AG04449 (cell line): ENCODE measurements at regions of chr2 and their contacts with region 1.

Region 1: DNA sequence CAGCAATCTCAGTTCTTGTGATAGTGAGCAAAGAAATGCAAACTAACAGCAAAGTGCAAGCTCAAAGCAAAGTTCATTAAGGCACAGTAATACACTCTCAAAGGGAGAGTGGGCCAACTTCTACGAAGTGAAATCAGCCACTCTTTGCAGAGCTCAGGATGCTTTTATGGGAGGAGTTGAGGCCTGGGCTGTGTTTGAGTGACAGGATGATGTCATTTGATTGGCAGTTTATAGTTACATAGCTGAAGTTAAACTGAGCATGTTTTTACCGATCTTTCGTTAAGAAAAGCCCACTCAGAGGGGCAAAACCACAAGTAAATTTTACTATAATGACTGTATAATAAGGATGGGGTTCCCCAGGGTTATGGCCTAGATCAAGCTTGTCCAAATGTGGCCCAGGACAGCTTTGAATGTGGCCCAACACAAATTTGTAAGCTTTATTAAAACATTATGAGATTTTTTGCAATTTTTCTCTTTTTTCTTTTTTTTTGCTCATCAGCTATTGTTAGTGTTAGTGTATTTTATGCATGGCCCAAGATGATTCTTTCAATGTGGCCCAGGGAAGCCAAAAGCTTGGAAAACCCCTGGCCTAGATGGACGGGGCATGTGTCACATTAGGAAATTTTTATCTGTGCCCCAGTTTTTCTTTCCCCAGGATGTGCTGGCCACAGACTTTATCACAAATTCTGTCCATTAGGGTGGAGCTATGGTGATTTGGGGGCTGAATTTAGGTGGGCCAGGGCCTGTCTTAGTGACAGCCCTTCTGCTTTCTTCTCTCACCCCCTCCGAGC is 8.3 kb upstream of the DNAH7 start:
- DNase-seq: no peak
- H3K4me3 ChIP-seq: no peak overlapping the region
- CTCF ChIP-seq: no peak

Region 2: GRCh38 chr2:195709901-195710806 is 366.8 kb before region 1 on chr2:
- CTCF ChIA-PET with region 1: no interaction called
- POLR2A ChIA-PET with region 1: no interaction called
- DNase-seq: peak; percentile 46
- H3K4me3 ChIP-seq: no peak overlapping the region
- CTCF ChIP-seq: no peak

Region 3: GRCh38 chr2:195937176-195937575 is 139.8 kb before region 1 on chr2:
- CTCF ChIA-PET with region 1: no interaction called
- POLR2A ChIA-PET with region 1: no interaction called
- DNase-seq: no peak
- H3K4me3 ChIP-seq: no peak overlapping the region
- CTCF ChIP-seq: no peak

Region 4: GRCh38 chr2:196054631-196055030 is 22.3 kb before region 1 on chr2:
- CTCF ChIA-PET with region 1: no interaction called
- POLR2A ChIA-PET with region 1: no interaction called
- DNase-seq: no peak
- H3K4me3 ChIP-seq: no peak overlapping the region
- CTCF ChIP-seq: no peak

Region 5: DNA sequence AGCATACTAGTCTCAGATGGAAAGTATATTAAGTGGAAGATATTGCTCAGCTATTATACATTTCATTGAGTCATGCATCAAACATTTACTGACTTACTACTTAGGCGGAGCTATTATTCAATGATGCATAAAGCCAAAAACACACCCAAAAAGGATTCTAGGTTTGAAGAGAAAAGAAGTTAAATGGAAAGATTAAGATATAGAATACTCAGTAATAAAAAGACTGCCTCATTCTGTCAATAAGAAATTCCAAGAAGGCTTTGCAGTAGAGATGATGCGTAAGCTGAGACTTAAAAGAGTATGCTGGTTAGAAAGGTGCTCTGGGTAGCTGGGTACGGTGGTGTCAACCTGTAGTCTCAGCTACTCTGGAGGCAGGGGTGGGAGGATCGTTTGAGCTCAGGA is 66.8 kb after region 1 on chr2:
- CTCF ChIA-PET with region 1: interaction called, 18 read pairs
- POLR2A ChIA-PET with region 1: no interaction called
- DNase-seq: no peak
- H3K4me3 ChIP-seq: no peak overlapping the region
- CTCF ChIP-seq: no peak

Region 6: DNA sequence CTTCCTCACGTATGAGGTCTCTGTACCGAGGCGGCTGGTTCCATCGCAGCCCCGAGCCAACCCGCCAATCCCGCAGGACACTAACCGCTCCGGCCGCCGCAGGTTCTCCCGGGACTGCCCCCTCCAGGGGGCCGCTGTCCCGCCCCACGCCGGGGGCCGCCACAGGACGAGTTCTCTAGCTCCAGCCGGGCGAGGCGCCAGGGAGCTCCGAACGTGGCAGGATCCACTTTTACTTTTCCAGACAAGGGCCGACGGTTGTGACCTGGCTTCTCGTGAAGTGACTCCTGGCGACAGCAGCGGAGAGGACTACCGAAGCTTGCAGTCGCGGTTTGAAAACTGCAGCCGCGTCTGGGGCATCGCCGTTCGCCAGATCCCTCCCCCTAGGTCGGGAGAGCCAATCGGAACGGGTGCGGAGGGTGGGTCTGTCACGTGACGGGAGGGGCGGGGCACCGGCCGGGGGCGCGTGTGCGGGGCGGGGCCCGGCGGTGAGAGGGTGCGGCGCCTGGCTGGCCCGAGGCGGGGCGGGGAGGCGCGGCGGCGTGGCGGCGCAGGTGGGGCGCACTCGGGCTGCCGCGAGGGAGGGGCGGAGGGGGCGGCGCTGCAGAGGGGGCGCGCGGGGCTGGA is 94.4 kb after region 1 on chr2 and contains the start of gene STK17B:
- CTCF ChIA-PET with region 1: interaction called, 18 read pairs
- POLR2A ChIA-PET with region 1: interaction called, 3 read pairs
- DNase-seq: peak; percentile 44
- H3K4me3 ChIP-seq: peak within 1 kb of the TSS; percentile 83
- CTCF ChIP-seq: peak; percentile 0

Region 7: DNA sequence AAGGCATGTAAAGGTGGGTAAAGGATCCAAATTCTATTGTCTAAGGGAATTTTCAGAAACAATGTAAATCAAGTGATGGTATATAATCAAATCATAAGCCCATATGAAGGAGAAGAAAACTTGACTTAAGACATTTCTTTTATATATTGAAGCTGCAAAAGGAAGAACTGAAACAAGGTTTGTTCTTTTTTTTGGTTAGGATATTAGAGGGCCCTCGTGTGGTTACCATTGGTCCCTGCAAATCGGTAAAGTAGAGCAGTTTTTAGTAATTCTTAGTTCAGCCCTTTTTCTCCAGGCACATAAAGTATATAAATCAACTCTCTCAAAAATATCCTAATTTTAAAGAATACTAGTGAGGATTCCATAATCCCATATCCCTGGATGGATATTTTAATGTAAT is 200.0 kb after region 1 on chr2:
- CTCF ChIA-PET with region 1: interaction called, 75 read pairs
- POLR2A ChIA-PET with region 1: interaction called, 3 read pairs
- DNase-seq: no peak
- H3K4me3 ChIP-seq: no peak overlapping the region
- CTCF ChIP-seq: peak; percentile 42

Region 8: GRCh38 chr2:196284144-196284844 is 207.3 kb after region 1 on chr2:
- CTCF ChIA-PET with region 1: interaction called, 75 read pairs
- POLR2A ChIA-PET with region 1: no interaction called
- DNase-seq: no peak
- H3K4me3 ChIP-seq: no peak overlapping the region
- CTCF ChIP-seq: no peak

Region 9: DNA sequence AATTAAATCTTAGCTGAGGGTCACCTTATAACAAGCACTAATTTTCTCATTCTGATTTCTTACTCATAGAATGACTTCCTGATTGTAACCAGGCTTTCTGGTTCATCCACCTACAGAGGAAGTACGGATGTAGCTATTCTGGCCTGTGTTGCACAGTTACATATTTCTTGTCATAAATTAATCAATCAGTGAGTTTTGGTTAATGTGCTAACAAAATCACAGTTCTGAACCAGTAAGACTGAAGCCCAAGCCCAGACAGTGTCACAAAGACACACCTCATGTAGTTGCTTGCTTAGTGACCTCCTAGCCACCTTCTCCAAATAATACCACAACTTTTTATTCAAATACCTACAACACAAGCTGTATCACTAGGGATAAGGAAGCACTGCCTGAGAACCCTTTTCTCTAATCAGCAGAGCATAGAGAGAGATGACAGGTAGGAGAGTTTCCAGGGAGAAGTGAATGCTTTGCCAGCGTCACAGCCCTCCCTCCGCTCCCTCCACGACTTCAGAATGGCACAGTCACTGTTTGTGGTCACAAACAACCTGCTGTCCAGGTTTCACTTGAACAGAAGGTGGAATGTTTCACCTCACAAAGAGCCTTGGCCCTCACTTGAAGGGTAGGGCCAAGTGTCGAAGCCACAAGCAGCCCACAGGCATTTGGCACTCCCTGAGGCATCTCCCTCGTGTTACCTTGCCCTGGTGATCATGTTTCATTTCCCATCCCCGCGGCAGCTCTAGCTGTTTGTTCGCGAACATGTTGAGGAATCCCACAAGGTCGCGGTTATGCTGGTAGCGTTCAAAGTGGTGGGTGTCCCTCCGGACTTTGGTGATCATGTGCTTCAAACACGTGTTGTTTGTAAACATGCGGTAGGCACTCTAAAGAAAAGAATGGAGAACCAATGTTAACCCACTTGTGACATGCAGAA is 215.2 kb after region 1 on chr2:
- CTCF ChIA-PET with region 1: interaction called, 50 read pairs
- POLR2A ChIA-PET with region 1: interaction called, 5 read pairs
- DNase-seq: no peak
- H3K4me3 ChIP-seq: no peak overlapping the region
- CTCF ChIP-seq: no peak

Region 10: DNA sequence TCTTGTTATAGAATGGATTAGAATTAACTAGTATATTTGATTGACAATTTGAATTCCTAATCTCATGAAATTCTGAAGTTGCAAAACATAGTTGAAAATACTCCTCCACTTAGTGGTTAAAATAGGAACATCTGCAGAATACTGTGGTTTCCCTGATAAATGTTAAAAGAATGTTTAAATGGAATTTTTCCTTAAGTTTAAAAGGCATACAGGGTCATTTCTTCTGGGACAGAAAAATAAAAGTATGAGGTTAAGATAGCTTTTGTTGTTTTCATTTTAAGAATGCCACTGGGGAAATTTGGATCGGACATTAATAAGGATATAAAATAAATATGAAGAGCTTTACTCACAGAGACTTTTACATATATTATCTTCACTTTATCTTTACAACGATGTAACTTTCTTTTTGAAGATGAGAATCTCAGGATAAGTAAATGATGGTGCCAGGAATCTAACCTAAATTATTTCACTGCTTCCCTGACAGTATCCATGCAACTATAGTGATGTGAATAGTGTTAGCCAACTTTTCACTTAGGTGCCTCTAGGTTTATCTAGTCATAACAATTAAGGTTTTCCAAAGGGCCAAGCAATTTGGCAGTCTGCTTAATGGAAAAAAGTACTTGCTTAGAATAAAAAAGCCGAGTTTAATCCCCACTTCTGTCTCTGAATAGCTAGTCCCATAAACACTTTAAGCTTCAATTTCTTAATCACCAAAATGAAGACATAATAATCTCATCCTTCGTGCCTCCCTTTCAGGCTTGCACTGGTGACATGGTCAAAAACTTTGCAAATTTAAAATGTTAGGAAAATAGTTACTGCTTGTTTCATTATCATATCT is 246.2 kb after region 1 on chr2:
- CTCF ChIA-PET with region 1: interaction called, 10 read pairs
- POLR2A ChIA-PET with region 1: no interaction called
- DNase-seq: peak; percentile 42
- H3K4me3 ChIP-seq: no peak overlapping the region
- CTCF ChIP-seq: no peak